Heart right ventricle (tissue), 16 donors: ENCODE measurements at regions of chr21 and their contacts with region 1.

Region 1: DNA sequence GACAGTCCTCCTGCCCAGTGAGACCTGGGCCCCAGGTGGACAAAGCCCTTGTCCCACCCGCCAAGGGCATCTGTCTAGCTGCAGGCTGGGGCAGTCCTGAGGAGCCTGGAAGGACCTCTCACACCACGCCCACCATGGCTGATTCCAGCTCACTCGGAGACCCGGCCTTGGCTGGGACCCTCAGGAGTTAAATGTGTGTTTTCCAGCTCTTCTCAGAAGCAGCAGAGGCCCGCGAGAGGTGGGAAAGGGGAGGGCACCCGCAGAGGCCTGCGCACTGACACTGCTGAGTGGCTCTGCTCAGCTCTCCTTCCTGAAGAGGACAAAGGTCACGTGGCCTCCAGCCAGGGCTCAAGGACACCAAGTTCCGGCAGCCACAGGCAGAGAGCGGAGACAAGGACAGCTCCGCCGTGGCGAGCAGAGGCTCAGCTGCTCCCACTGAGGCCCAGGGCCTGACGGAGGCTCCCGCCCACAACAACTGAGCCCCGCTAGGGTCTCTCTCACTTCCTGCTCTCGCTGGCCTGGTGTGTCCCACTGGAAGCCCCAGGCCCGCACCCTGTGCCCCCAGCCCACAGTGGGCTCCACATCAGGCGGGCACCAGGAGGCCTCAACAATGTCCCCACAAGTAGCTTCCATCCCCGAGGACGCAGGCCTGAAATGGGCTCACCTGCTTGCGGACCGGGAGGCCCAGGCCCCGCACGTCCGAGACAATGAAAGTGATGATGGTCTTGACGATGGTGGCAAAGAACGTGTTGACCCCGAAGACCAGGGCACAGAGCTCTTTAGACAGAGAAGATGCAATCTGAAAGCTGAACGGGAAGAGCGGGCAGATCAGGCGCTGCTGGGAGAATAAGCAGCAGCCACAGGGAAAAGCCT is 16.9 kb downstream of the SLC19A1 start:
- DNase-seq: peak; percentile 44 to 83
- ATAC-seq: peak; percentile 36 to 90 (median 79)
- H3K4me3 ChIP-seq: no peak overlapping the region
- H3K27ac ChIP-seq: peak overlapping the region in 5 of 10 donors; percentile 22 to 62 (median 28)
- H3K4me1 ChIP-seq: peaks cover 0 to 5% (median 0%) of the 10 kb centered on the region in 9 donors
- H3K27me3 ChIP-seq: no peaks in the 10 kb centered on the region
- CTCF ChIP-seq: no peak

Region 2: GRCh38 chr21:45494843-45495640 is 30.3 kb before region 1 on chr21:
- intact Hi-C with region 1: loop called in 1 of 10 experiments (anchors 5 kb)
- DNase-seq: peak in 1 of 2 donors; percentile 11
- ATAC-seq: no peak
- H3K4me3 ChIP-seq: no peak overlapping the region
- H3K27ac ChIP-seq: no peak overlapping the region
- H3K4me1 ChIP-seq: no peaks in the 10 kb centered on the region
- H3K27me3 ChIP-seq: no peaks in the 10 kb centered on the region
- CTCF ChIP-seq: no peak